Right ventricle myocardium superior (tissue), 1 donor: ENCODE measurements at regions of chr4 and their contacts with region 1.

Region 1: DNA sequence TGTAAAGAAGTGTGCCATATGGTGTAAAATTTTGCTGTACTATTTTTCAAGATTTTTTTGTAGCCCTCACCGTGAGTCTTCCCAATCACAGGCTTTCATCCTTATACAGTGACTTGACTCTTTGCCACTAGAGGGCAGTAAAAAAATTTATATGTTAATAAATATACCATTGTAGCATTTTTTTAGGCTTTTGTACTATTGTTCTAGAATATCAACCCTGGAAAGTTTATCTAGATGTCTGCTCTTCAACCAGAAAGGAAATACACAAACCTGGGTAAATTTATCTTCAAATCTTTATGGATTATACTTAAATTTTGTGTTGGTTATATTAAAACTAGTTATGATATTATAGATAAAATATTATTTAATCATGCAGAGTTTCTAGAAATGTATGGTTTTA is 235.3 kb downstream of the TENM3 start:
- DNase-seq: no peak
- ATAC-seq: peak; percentile 61

Region 2: GRCh38 chr4:182806259-182807252 is 328.1 kb after region 1 on chr4:
- intact Hi-C with region 1: loop called (anchors 5 kb)
- DNase-seq: peak; percentile 88
- ATAC-seq: peak; percentile 96